G401 (cell line): ENCODE measurements at regions of chr6 and their contacts with region 1.

Region 1: DNA sequence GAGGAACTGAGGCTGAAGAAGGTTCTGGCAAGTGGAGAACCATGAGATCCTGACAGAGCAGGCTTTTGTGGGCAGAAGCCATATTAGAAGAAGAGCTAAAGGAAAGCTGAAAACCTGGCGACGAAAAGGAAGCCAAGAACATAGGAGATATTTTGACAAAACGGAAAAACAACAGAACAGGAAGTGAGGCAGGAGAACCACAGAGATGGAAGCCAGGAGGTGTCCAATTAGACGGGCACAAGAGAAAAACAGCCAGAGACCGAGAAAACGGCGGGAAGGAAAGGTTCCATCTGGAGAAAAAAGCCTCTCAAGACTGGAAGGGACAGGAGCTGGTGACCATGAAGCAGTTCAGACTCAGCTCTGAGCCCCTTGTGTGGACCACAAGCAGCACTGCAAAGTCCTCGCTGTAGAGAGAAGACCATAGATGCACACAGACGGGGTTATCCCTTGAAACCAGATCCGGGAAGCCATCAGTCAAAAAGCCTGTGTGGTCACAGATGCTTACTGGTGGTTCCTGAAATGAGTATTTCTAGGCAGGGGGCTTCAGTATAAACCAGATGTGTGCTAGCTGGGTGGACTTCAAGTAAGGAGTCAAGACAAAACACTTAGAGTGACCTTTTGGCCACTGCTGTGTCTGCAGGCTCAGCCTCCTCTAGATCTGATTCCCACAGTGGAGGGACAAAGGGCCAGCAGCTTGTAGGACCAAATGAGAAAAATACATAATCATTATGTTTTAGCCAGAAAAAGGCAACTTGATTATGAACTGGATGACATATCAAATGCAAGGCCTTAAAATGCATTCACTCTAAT is 30.7 kb downstream of the SSR1 start:
- DNase-seq: no peak

Region 2: GRCh38 chr6:7561153-7561964 is 279.1 kb after region 1 on chr6:
- in situ Hi-C with region 1: loop called (anchors 25 kb)
- DNase-seq: no peak